A549 (cell line): ENCODE measurements at regions of chr1 and their contacts with region 1.

Region 1: GRCh38 chr1:156860113-156860627 is 495 bp upstream of the NTRK1 start:
- DNase-seq: peak; percentile 48 to 70
- ATAC-seq: peak; percentile 73 to 87
- H3K4me3 ChIP-seq: peak overlapping the region; percentile 46
- H3K27ac ChIP-seq: peak overlapping the region in 1 of 2 experiments; percentile 59; a peak in 3 of 6 replicates
- H3K4me1 ChIP-seq: peaks cover 8% of the 10 kb centered on the region; the same call in 1 of the 3 replicates
- CTCF ChIP-seq: peak; percentile 96
- EP300 ChIP-seq: no peak
- POLR2A ChIP-seq: no peak
- RAD21 ChIP-seq: peak; percentile 79 to 92

Region 2: DNA sequence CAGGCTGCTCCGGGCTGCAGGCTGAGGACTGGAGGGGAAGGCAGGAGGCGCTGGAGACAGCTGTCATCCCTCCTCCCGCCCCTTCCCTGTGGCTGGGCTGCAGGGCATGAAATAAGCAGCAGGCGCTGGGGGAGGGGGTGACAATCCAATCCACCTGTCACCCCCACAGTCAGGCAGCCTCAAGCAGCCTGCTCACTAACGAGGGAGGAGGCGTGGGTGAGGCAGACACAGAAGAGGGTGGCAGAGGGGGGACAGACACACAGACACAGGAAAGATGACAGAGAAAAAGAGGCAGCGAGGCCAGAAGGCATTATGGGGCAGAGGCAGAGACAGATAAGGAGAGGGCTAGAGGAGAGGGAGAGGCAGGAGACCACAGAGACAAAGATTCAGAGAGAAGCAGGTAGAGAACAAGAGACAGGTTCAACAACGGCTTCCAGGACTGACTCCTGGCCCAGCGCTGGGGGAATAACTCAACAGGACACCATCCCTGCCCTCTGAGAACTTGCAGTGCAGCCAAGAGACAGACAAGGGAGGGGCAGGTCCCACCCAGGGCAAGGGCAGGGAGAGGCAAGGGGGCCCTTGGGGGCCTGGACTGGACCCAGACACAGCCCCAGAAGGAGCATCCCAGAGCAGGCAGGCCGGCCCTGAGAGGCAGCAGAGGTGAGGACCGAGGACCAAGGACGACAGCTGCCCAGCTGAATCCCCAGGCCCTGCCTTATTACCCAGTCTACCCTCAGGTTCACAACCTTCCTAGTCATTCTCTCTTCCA is 370.8 kb before region 1 on chr1:
- CTCF ChIA-PET with region 1: no interaction called
- POLR2A ChIA-PET with region 1: no interaction called
- DNase-seq: no peak
- ATAC-seq: peak; percentile 3 to 31; a peak in 3 of 6 replicates
- H3K4me3 ChIP-seq: no peak overlapping the region
- H3K27ac ChIP-seq: peak overlapping the region; percentile 48 to 75; a peak in 3 of 6 replicates
- H3K4me1 ChIP-seq: peaks cover 64% of the 10 kb centered on the region
- CTCF ChIP-seq: no peak
- EP300 ChIP-seq: no peak
- POLR2A ChIP-seq: no peak
- RAD21 ChIP-seq: no peak

Region 3: DNA sequence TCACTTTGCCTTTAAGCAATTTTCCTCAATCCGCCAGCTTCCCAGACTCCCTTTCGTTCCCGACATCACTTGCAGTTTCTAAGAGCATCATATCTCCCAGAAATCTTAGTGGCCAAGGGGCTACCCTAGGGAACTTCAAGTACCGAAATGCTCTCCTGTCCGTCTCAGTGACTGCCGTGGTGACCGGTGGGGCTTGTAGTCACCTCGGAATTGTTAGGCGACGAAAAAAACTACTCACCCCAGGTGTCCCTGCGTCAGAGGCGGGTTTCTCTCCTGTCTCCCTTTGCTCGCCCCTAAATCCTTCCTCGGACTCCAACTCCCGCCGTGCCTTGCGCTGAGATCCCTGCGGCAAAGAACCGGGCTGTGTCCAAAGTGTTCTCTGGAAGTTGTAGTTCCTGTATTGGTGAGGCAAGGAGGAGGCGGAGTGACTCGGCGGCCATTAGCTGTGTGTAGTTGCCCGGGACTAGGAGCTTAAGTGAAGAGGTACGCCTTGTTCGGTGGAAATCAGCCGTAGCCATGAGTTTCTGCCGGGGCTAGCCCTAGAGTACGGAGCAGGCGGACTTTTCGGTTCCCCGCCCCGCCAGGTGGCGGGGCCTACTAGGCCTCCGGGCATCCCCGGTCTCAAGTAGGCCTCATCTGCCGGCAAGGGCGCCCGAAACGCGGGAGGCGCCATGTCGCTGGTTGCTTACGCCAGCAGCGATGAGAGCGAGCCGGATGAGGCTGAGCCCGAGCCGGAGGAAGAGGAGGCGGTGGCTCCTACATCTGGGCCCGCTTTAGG is 92.9 kb before region 1 on chr1 and contains the start of gene PRCC:
- CTCF ChIA-PET with region 1: interaction called, 14 read pairs
- POLR2A ChIA-PET with region 1: interaction called, 3 read pairs
- DNase-seq: peak; percentile 90 to 100
- ATAC-seq: peak; percentile 97
- H3K4me3 ChIP-seq: peak within 1 kb of the TSS; percentile 83
- H3K27ac ChIP-seq: peak within 1 kb of the TSS; percentile 91 to 94
- H3K4me1 ChIP-seq: peaks cover 24% of the 10 kb centered on the region
- CTCF ChIP-seq: no peak
- EP300 ChIP-seq: no peak
- POLR2A ChIP-seq: peak; percentile 22
- RAD21 ChIP-seq: no peak
- polyA plus RNA-seq, gene PRCC: 52.0 and 65.3 TPM in 2 replicates

Region 4: DNA sequence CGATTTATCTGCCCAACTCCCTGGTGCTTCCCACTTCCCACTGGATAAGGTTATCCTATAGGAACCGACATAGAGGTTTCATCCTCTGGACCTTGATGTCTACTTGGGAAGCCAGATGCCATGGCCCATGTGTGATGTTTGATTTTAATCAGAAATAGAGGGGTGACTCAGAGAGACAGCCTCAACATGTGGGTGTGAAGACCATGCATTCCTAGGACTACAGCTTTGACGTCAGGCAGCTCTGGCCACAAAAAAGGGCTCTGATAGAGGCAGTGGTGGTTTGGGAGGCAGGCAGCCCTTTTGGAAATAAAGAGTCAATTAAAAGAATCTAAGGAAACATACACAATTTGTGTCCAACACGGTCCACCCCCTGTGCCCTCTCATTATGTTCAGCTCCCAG is 38.4 kb before region 1 on chr1:
- CTCF ChIA-PET with region 1: interaction called, 20 read pairs
- POLR2A ChIA-PET with region 1: no interaction called
- DNase-seq: no peak
- ATAC-seq: no peak
- H3K4me3 ChIP-seq: no peak overlapping the region
- H3K27ac ChIP-seq: no peak overlapping the region
- H3K4me1 ChIP-seq: no peaks in the 10 kb centered on the region
- CTCF ChIP-seq: no peak
- EP300 ChIP-seq: no peak
- POLR2A ChIP-seq: no peak
- RAD21 ChIP-seq: no peak

Region 5: DNA sequence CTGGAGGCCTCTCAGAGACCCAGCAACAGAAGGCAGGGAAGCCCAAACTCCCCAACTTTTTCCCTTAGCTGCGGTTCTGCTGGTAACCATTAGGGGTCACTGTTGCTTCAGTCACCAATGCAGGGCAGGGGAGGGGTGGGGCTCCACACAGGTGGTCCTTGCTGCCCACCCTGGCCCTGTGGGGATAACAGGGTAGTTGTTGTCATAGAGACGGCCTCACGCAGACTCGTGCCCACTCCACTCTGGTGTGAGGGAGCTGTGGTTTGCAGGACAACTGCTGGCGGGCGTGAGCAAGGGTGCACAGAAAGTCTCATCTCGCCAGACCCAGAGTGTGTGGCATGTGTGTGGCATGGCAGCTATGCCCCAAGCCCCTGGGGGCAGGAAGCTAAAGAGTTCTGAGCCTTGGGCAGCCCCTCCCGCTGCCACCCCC is 21.2 kb before region 1 on chr1:
- CTCF ChIA-PET with region 1: interaction called, 289 read pairs
- POLR2A ChIA-PET with region 1: no interaction called
- DNase-seq: peak in 1 of 2 experiments; percentile 72
- ATAC-seq: peak; percentile 60 to 85; a peak in 5 of 6 replicates
- H3K4me3 ChIP-seq: no peak overlapping the region
- H3K27ac ChIP-seq: no peak overlapping the region
- H3K4me1 ChIP-seq: no peaks in the 10 kb centered on the region
- CTCF ChIP-seq: peak; percentile 81
- EP300 ChIP-seq: no peak
- POLR2A ChIP-seq: no peak
- RAD21 ChIP-seq: peak; percentile 83 to 87

Region 6: GRCh38 chr1:156898161-156898566 is 38.0 kb after region 1 on chr1:
- CTCF ChIA-PET with region 1: interaction called, 178 read pairs
- POLR2A ChIA-PET with region 1: no interaction called
- DNase-seq: peak in 1 of 2 experiments; percentile 38
- ATAC-seq: peak in 1 of 2 experiments; percentile 3; a peak in 2 of 6 replicates
- H3K4me3 ChIP-seq: no peak overlapping the region
- H3K27ac ChIP-seq: peak overlapping the region; percentile 88 to 93
- H3K4me1 ChIP-seq: peaks cover 70% of the 10 kb centered on the region
- CTCF ChIP-seq: no peak
- EP300 ChIP-seq: no peak
- POLR2A ChIP-seq: no peak
- RAD21 ChIP-seq: no peak

Region 7: DNA sequence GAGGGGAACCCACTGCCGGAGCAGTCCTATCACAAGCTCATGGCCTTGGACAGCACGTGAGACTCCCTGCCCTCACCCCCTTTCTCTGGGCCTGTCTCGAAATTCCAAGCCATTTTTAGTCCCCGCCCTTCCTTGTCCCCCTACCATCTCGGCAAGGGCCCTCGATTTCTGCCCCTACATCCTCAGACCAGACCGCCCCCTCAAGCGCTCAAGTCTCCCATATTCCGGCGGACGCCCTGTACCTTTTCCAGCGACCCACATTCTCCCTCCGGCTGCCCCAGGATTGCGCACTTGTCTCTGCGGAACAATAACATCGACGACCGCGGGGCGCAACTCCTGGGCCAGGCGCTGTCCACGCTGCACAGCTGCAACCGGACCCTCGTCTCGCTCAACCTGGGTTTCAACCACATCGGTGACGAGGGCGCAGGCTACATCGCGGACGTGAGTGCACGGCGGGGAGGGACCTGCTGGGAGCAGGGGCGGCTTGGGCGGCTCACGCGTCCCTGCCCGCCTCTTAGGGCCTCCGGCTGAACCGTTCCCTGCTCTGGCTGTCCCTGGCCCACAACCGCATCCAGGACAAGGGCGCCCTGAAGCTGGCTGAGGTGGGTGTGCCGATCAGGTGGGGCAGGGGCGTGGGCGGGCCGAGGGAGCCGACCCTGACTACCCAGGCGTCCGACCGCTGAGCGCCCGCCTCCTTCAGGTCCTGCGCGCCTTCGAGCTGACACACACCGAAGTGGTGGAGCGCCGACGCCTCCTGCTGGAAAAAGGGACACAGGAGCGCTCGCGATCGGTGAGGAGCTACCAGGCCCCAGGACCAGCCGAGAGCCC is 67.3 kb after region 1 on chr1:
- CTCF ChIA-PET with region 1: interaction called, 45 read pairs
- POLR2A ChIA-PET with region 1: no interaction called
- DNase-seq: peak; percentile 84 to 87
- ATAC-seq: peak; percentile 85 to 94
- H3K4me3 ChIP-seq: peak overlapping the region; percentile 46
- H3K27ac ChIP-seq: peak overlapping the region; percentile 61 to 82; a peak in 5 of 6 replicates
- H3K4me1 ChIP-seq: peaks cover 7% of the 10 kb centered on the region; the same call in 1 of the 3 replicates
- CTCF ChIP-seq: peak; percentile 82
- EP300 ChIP-seq: no peak
- POLR2A ChIP-seq: no peak
- RAD21 ChIP-seq: peak; percentile 90 to 92

Region 8: DNA sequence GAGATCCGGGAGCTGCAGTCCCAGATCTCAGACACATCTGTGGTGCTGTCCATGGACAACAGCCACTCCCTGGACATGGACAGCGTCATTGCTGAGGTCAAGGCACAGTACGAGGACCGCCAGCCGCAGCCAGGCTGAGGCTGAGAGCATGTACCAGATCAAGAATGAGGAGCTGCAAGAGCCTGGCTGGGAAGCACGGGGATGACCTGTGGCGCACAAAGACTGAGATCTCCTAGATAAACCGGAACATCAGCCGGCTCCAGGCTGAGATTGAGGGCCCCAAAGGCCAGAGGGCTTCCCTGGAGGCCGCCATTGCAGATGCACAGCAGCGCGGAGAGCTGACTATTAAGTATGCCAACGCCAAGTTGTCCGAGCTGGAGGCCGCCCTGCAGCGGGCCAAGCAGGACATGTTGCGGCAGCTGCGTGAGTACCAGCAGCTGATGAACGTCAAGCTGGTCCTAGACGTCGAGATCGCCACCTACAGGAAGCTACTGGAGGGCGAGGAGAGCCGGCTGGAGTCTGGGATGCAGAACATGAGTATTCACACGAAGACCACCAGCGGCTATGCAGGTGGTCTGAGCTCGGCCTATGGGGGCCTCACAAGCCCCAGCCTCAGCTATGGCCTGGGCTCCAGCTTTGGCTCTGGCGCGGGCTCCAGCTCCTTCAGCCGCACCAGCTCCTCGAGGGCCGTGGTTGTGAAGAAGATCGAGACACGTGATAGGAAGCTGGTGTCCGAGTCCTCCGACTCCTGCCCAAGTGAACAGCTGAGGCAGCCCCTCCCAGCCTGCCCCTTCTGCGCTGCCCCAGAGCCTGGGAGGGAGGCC is 214.0 kb after region 1 on chr1:
- CTCF ChIA-PET with region 1: no interaction called
- POLR2A ChIA-PET with region 1: no interaction called
- DNase-seq: peak; percentile 56 to 74
- ATAC-seq: peak; percentile 64 to 83; a peak in 5 of 6 replicates
- H3K4me3 ChIP-seq: peak overlapping the region; percentile 25
- H3K27ac ChIP-seq: no peak overlapping the region
- H3K4me1 ChIP-seq: peaks cover 5% of the 10 kb centered on the region; the same call in 2 of the 3 replicates
- CTCF ChIP-seq: peak; percentile 47
- EP300 ChIP-seq: no peak
- POLR2A ChIP-seq: no peak
- RAD21 ChIP-seq: peak; percentile 50 to 58; a peak in 4 of 5 replicates